ENCODE measurements at regions of chr20 and their contacts with region 1.

Region 1: GRCh38 chr20:58467572-58468527 is 47.3 kb downstream of the APCDD1L start:
- DNase-seq: no peak
- ATAC-seq: no peak
- H3K4me3 ChIP-seq: no peak overlapping the region
- H3K4me3 Mint-ChIP-seq: no peak overlapping the region
- H3K27ac ChIP-seq: no peak overlapping the region
- H3K27ac Mint-ChIP-seq: no peak overlapping the region
- H3K4me1 ChIP-seq: no peaks in the 10 kb centered on the region
- H3K4me1 Mint-ChIP-seq: no peaks in the 10 kb centered on the region
- H3K27me3 ChIP-seq: no peaks in the 10 kb centered on the region
- H3K27me3 Mint-ChIP-seq: peaks cover 7% of the 10 kb centered on the region
- CTCF ChIP-seq: no peak

Region 2: GRCh38 chr20:58524814-58525213 is 57.0 kb after region 1 on chr20:
- CTCF ChIA-PET with region 1: no interaction called
- POLR2A ChIA-PET with region 1: no interaction called
- intact Hi-C with region 1: loop called in 1 of 2 experiments (anchors 10 kb)
- DNase-seq: no peak
- ATAC-seq: no peak
- H3K4me3 ChIP-seq: no peak overlapping the region
- H3K4me3 Mint-ChIP-seq: no peak overlapping the region
- H3K27ac ChIP-seq: no peak overlapping the region
- H3K27ac Mint-ChIP-seq: no peak overlapping the region
- H3K4me1 ChIP-seq: no peaks in the 10 kb centered on the region
- H3K4me1 Mint-ChIP-seq: no peaks in the 10 kb centered on the region
- H3K27me3 ChIP-seq: no peaks in the 10 kb centered on the region
- H3K27me3 Mint-ChIP-seq: no peaks in the 10 kb centered on the region
- CTCF ChIP-seq: no peak

Region 3: GRCh38 chr20:58555078-58555765 is 87.4 kb after region 1 on chr20:
- CTCF ChIA-PET with region 1: no interaction called
- POLR2A ChIA-PET with region 1: no interaction called
- intact Hi-C with region 1: no loop called
- DNase-seq: no peak
- ATAC-seq: no peak
- H3K4me3 ChIP-seq: no peak overlapping the region
- H3K4me3 Mint-ChIP-seq: no peak overlapping the region
- H3K27ac ChIP-seq: no peak overlapping the region
- H3K27ac Mint-ChIP-seq: no peak overlapping the region
- H3K4me1 ChIP-seq: no peaks in the 10 kb centered on the region
- H3K4me1 Mint-ChIP-seq: no peaks in the 10 kb centered on the region
- H3K27me3 ChIP-seq: peaks cover 0 to 10% of the 10 kb centered on the region in 2 experiments
- H3K27me3 Mint-ChIP-seq: peaks cover 46% of the 10 kb centered on the region
- CTCF ChIP-seq: no peak

Measured in CD4-positive, alpha-beta T cell (primary cell).